HEK293 (cell line): ENCODE measurements at regions of chr3 and their contacts with region 1.

Region 1: DNA sequence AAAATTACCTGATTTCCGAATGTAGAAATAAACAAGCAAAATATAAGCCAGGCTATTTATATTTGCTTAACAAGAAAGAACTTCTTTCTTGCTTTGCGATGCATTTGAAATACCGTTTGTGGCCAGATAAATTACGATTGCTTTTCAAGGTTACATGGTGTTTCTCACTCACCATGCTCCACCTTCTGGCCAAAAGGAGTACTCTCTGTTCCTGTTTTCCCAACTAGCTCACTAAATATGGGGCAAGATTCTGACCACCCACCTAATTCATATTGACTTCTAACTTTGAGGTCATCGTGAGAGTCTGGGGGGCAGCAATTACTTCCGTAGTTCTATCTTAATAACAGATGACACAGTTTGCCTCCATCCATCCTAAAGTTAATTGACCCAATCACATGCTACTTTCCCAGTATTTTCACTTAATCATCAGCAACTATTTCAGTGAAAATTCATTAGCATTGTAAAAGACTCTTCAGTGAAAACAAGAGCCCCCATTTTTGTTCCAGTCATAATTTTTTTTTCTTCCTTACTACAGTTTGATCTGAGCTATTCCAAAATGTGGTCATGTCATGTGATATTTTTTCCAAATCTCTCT is 25.9 kb downstream of the ACP3 start:
- H3K4me3 ChIP-seq: no peak overlapping the region
- H3K27ac ChIP-seq: no peak overlapping the region
- H3K4me1 ChIP-seq: no peaks in the 10 kb centered on the region
- CTCF ChIP-seq: peak; percentile 42; the same call in 1 of the 2 replicates

Region 2: GRCh38 chr3:132047209-132047608 is 295.9 kb before region 1 on chr3:
- CTCF ChIA-PET with region 1: no interaction called
- POLR2A ChIA-PET with region 1: no interaction called
- H3K4me3 ChIP-seq: no peak overlapping the region
- H3K27ac ChIP-seq: no peak overlapping the region
- H3K4me1 ChIP-seq: no peaks in the 10 kb centered on the region
- CTCF ChIP-seq: no peak

Region 3: GRCh38 chr3:132253262-132253878 is 89.7 kb before region 1 on chr3:
- CTCF ChIA-PET with region 1: interaction called, 130 read pairs
- POLR2A ChIA-PET with region 1: no interaction called
- H3K4me3 ChIP-seq: no peak overlapping the region
- H3K27ac ChIP-seq: no peak overlapping the region
- H3K4me1 ChIP-seq: no peaks in the 10 kb centered on the region
- CTCF ChIP-seq: no peak

Region 4: DNA sequence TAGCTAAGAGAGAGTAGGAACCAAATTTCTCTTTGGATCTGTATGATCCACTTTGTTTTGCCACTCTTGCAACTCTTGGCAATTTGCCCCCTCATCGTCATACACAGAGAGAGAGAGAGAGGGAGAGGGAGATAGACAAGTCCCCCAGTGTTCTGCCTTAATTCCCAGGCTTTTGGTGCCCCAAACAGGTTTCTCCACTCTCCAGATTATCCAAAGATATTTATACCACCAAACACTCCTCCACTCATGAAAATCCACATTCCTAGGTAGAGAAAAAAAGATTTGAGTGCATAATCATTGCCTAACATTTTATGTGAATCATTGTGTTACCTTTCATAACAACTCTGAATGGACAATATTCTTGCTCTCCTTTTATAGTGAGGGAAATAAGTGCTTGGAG is 10.6 kb before region 1 on chr3:
- CTCF ChIA-PET with region 1: interaction called, 10 read pairs
- POLR2A ChIA-PET with region 1: no interaction called
- H3K4me3 ChIP-seq: no peak overlapping the region
- H3K27ac ChIP-seq: no peak overlapping the region
- H3K4me1 ChIP-seq: no peaks in the 10 kb centered on the region
- CTCF ChIP-seq: no peak

Region 5: GRCh38 chr3:132399054-132399929 is 56.2 kb after region 1 on chr3:
- CTCF ChIA-PET with region 1: interaction called, 136 read pairs
- POLR2A ChIA-PET with region 1: no interaction called
- H3K4me3 ChIP-seq: no peak overlapping the region
- H3K27ac ChIP-seq: no peak overlapping the region
- H3K4me1 ChIP-seq: no peaks in the 10 kb centered on the region
- CTCF ChIP-seq: peak; percentile 32; the same call in 1 of the 2 replicates